ENCODE measurements at regions of chr4 and their contacts with region 1.

Region 1: DNA sequence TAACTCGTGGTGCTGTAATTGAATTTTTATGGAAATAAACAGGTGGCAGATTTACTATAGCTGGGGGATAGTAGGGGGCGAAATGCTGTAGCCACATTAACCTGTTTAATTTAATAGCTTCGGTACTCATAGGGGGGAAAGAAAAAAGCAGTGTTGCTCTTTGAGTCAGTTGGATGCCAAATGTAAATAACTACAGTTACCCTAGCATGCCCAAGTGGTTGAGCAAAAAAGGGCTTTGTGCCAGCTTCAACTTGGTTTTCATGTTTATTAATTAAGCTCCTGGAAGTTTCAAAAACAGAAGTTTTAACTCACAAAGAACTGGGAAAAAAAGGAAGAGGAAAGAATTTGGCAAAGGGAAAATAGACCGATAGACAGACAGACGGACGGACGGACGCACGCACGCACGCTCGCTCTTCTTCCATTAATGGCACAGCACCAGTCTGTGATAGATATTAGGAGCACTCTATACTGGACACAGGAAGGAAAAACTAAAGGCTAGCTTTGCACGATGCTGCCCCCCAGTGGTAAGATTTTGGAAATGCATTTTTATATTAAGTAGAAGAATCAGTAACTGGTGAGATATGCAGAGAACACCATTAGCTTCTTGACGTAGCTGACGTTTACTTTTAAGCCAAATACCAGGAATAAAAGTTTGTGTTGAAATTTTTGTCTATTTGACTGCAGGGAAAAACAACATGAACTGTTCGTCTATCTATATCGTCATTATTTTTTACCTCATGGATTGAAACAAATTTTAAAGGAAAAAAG is 151.8 kb downstream of the SLC7A11 start:
- DNase-seq: peak; percentile 76
- ATAC-seq: peak; percentile 94
- H3K4me3 ChIP-seq: peak overlapping the region; percentile 31 to 51
- H3K27ac ChIP-seq: no peak overlapping the region
- H3K4me1 ChIP-seq: peaks cover 0 to 13% of the 10 kb centered on the region in 2 experiments; a peak in 2 of 4 replicates
- H3K27me3 ChIP-seq: no peaks in the 10 kb centered on the region
- CTCF ChIP-seq: peak; percentile 66 to 83 (median 78)
- POLR2A ChIP-seq: no peak
- RAD21 ChIP-seq: peak; percentile 91

Region 2: DNA sequence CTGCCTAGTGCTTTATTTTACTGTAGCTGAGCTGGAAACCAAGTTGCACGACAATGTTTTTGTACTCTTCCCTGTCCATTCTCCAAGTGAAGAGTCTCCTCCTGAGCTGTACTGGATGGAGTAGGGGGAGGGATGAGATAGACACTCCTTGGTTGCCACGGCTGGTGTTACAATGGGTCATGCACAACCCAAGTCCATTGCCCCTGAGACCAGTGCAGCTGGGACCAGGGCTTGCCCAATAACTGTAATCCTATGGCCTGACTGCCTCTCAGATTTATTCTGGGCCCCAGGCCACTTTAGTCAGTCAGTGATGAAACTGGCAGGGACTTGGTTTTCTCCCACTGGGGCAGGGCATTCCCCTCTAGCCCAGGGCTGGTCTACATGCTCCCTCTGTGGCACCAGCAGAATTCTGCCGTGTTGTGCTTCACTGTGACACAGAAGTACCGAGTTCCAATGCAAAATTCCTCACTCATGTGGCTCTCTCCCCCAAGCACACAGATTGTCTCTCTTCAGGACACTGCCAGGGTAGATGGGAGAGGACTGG is 354.7 kb before region 1 on chr4:
- CTCF ChIA-PET with region 1: no interaction called
- POLR2A ChIA-PET with region 1: no interaction called
- RAD21 ChIA-PET with region 1: no interaction called
- intact Hi-C with region 1: loop called (anchors 1 kb)
- DNase-seq: no peak
- ATAC-seq: no peak
- H3K4me3 ChIP-seq: no peak overlapping the region
- H3K27ac ChIP-seq: no peak overlapping the region
- H3K4me1 ChIP-seq: no peaks in the 10 kb centered on the region
- H3K27me3 ChIP-seq: no peaks in the 10 kb centered on the region
- CTCF ChIP-seq: no peak
- POLR2A ChIP-seq: no peak
- RAD21 ChIP-seq: no peak

Region 3: GRCh38 chr4:138111456-138112000 is 21.2 kb after region 1 on chr4:
- CTCF ChIA-PET with region 1: interaction called, 10 read pairs
- POLR2A ChIA-PET with region 1: no interaction called
- RAD21 ChIA-PET with region 1: no interaction called
- intact Hi-C with region 1: no loop called
- DNase-seq: peak; percentile 18
- ATAC-seq: peak; percentile 64
- H3K4me3 ChIP-seq: no peak overlapping the region
- H3K27ac ChIP-seq: no peak overlapping the region
- H3K4me1 ChIP-seq: peaks cover 7 to 17% of the 10 kb centered on the region in 2 experiments; a peak in 3 of 4 replicates
- H3K27me3 ChIP-seq: no peaks in the 10 kb centered on the region
- CTCF ChIP-seq: no peak
- POLR2A ChIP-seq: no peak
- RAD21 ChIP-seq: peak; percentile 6; the same call in 1 of the 2 replicates

Region 4: GRCh38 chr4:138576684-138577083 is 486.4 kb after region 1 on chr4:
- CTCF ChIA-PET with region 1: interaction called, 3 read pairs
- POLR2A ChIA-PET with region 1: no interaction called
- RAD21 ChIA-PET with region 1: interaction called in 1 of 2 experiments, 3 read pairs
- intact Hi-C with region 1: loop called (anchors 10 kb)
- DNase-seq: peak; percentile 64
- ATAC-seq: peak; percentile 89
- H3K4me3 ChIP-seq: no peak overlapping the region
- H3K27ac ChIP-seq: no peak overlapping the region
- H3K4me1 ChIP-seq: no peaks in the 10 kb centered on the region
- H3K27me3 ChIP-seq: no peaks in the 10 kb centered on the region
- CTCF ChIP-seq: peak; percentile 56 to 81 (median 62); a peak in 5 of 6 replicates
- POLR2A ChIP-seq: no peak
- RAD21 ChIP-seq: peak; percentile 88

Region 5: DNA sequence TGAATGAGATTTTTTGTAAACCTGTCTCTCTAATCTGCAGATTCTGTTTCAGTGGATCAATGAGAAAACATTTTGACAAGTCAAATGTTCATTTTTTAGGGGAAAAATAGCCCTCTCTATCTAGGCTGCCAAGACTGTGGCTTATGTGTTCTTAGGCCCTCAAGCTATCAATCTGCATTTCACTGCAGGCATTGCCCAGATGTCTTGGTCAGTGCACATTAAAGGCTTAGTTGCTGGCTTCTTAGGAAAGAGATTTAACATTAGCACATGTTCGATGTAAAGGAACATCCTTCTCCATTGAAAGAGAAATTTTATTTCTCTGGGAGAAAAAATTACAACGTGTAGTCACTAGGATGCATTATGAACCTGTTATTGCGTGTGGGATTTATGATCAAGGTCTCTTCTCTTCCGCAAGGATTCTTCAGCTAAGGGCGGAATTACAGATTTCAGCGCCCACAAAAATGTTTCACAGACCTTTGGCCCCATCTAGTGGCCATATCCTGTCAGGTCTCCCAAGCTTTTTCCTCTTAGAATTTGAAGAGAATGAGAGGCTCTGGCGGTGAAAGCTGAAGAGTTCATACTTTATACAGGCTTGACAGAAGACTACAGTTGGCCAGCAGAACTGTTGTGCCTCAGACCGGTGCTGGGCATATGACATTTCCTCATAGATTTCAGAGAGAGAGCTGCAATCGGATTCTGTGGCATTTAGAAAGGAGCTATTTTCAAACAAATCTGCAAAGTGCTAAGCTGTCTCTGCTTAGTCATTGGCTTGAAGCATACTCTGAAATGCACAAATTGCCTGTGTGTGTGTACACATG is 780.6 kb after region 1 on chr4:
- CTCF ChIA-PET with region 1: interaction called, 10 read pairs
- POLR2A ChIA-PET with region 1: no interaction called
- RAD21 ChIA-PET with region 1: interaction called in 1 of 2 experiments, 5 read pairs
- intact Hi-C with region 1: no loop called
- DNase-seq: peak; percentile 65
- ATAC-seq: peak; percentile 82
- H3K4me3 ChIP-seq: no peak overlapping the region
- H3K27ac ChIP-seq: no peak overlapping the region
- H3K4me1 ChIP-seq: peaks cover 0 to 9% of the 10 kb centered on the region in 2 experiments; a peak in 1 of 4 replicates
- H3K27me3 ChIP-seq: peaks cover 6% of the 10 kb centered on the region; the same call in 1 of the 2 replicates
- CTCF ChIP-seq: peak; percentile 71 to 87 (median 81)
- POLR2A ChIP-seq: no peak
- RAD21 ChIP-seq: peak; percentile 94

Measured in HCT116 (cell line).